Activated T-helper 1 cell treated with anti-CD3 and anti-CD28 coated beads, Interleukin-12 subunit alpha, Interleukin-12 subunit beta, Interleukin-2, Interleukin-4 antibody, amounts not matched to agents 30 ng/mL and 10 ng/mL and 1 ng/mL, durations not matched to agents 14 hours and 24 hours and 36 hours (primary cell): ENCODE measurements at regions of chr22 and their contacts with region 1.

Region 1: DNA sequence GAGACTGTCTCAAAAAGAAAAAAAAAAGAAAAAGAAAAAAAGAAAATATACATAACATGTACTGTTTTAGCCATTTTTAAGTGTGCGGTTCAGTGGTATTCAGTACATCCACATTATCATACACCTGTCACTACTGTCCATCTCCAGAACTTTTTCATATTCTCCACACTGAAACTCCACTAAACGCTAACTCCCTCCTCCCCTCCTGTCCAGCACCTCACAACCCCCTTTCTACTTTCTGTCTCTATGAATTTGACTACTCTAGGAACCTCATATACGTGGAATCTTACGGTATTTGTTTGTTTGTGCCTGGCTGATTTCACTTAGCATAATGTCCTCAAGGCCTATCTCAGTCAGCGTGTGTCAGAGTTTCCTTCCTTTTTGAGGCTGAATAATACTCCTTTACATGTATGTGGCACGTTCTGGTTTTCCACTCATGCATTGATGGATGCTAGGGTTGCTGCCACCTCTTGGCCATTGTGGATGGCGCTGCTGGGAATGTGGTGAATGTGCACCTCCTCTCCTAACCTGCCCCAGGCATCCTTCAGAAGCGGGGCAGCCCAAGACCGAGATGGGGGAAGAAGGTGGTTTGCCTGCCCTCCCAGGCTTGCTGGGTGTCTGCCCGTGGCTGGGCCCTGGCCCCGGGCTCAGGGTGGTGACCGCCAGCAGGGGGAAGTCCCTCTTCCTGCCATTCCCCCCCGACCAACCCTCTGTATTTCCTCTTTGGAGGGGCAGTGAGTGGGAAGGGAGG is 60.5 kb downstream of the BCR start:
- DNase-seq: no peak
- H3K4me3 Mint-ChIP-seq: peak overlapping the region; percentile 21
- H3K27ac Mint-ChIP-seq: peak overlapping the region; percentile 91
- H3K4me1 Mint-ChIP-seq: peaks cover 75% of the 10 kb centered on the region
- H3K27me3 Mint-ChIP-seq: no peaks in the 10 kb centered on the region

Region 2: GRCh38 chr22:23128269-23129108 is 112.3 kb before region 1 on chr22:
- intact Hi-C with region 1: no loop called
- DNase-seq: peak; percentile 55
- H3K4me3 Mint-ChIP-seq: no peak overlapping the region
- H3K27ac Mint-ChIP-seq: no peak overlapping the region
- H3K4me1 Mint-ChIP-seq: no peaks in the 10 kb centered on the region
- H3K27me3 Mint-ChIP-seq: peaks cover 3% of the 10 kb centered on the region

Region 3: DNA sequence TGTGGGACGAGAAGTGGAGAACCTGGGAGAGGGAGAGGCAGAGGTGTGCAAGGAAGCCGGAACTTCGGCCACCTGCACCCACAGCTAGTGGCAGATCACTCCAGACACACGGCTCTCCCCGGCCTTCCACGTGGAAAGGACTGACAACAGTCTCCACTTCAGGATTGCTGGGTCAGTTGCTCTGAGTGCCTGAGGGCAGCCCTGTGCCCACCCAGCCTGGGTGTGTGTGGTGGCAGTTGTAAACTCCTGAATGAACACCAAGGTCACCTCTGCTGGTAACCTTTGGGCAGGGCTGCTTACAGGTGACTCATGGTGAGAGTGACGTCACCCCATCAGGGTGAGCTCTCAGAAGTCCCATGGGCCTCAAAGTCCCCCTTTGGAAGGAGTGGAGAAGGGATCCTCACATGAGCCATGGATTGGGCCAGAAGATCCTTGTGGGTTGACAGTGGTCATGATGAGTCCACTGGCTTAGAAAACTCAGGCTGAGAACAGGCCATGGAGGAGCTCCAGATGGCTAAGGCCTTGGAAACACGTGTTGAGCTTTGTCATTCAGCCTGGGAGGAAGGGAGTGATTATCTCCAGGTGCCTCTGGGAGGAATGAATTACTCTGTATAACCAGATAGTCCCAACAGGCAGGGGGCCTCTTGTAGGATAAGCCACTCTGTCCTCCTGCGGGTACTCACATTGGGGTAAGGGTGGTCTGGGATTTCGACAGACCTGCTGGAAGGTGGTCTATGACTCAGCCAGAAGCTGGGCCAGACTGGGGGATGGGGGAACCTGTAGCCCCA is 10.8 kb after region 1 on chr22:
- intact Hi-C with region 1: no loop called
- DNase-seq: no peak
- H3K4me3 Mint-ChIP-seq: no peak overlapping the region
- H3K27ac Mint-ChIP-seq: peak overlapping the region; percentile 4
- H3K4me1 Mint-ChIP-seq: peaks cover 40% of the 10 kb centered on the region
- H3K27me3 Mint-ChIP-seq: no peaks in the 10 kb centered on the region

Region 4: DNA sequence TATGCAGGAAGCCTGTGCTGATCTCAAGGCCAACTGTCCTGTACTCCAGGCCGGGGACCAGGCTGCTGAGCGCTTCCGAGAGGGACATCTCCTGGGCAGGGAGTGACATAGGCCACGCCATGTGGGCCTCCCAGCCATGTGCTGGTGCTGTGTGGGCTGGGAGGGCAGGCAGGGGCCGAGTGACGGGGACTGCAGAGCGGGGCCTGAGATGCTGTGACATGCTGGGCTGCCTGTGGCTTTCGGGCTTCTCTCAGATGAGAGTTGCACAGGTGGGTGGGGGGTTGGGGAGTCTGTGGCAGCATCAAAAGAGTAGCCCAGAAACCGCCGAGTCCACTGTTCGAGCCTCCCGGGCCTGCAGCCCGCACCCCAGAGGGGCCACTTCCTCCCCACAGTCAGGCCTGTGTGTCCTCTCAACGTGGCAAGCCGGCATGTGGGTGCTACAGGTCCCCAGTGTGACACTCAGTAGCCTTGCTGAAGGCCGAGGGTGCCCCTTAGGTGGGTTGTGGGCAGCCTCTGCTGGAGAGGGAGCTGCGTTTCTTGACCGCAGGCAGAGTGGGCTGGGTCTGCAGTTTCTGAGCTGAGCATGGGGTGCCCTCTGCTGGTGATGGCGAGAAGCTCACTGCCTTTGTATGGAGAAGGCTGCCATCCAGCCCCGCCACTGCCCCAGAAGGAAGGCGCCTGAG is 40.7 kb after region 1 on chr22:
- intact Hi-C with region 1: loop called (anchors 2 kb)
- DNase-seq: peak; percentile 68
- H3K4me3 Mint-ChIP-seq: no peak overlapping the region
- H3K27ac Mint-ChIP-seq: no peak overlapping the region
- H3K4me1 Mint-ChIP-seq: peaks cover 31% of the 10 kb centered on the region
- H3K27me3 Mint-ChIP-seq: no peaks in the 10 kb centered on the region

Region 5: DNA sequence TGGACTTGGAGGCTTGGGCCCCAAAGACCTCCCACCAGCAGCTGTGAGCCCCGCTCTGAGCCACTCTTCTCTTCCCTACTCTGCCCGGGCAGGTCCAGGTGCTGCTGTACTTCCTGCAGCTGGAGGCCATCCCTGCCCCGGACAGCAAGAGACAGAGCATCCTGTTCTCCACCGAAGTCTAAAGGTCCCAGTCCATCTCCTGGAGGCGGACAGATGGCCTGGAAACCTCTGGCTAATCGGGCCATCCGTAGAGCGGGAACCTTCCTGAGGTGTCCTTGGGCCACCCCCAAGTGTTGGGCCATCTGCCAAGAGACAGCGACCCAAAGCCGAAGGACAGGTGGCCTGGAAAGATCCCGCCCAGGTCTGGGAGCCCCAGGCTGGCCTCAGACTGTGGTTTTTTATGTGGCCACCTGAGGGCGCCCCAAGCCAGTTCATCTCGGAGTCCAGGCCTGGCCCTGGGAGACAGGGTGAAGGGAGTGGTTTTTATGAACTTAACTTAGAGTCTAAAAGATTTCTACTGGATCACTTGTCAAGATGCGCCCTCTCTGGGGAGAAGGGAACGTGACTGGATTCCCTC is 74.6 kb after region 1 on chr22:
- intact Hi-C with region 1: no loop called
- DNase-seq: peak; percentile 35
- H3K4me3 Mint-ChIP-seq: no peak overlapping the region
- H3K27ac Mint-ChIP-seq: no peak overlapping the region
- H3K4me1 Mint-ChIP-seq: no peaks in the 10 kb centered on the region
- H3K27me3 Mint-ChIP-seq: no peaks in the 10 kb centered on the region